Endothelial cell of umbilical vein (primary cell): ENCODE measurements at regions of chr9 and their contacts with region 1.

Region 1: DNA sequence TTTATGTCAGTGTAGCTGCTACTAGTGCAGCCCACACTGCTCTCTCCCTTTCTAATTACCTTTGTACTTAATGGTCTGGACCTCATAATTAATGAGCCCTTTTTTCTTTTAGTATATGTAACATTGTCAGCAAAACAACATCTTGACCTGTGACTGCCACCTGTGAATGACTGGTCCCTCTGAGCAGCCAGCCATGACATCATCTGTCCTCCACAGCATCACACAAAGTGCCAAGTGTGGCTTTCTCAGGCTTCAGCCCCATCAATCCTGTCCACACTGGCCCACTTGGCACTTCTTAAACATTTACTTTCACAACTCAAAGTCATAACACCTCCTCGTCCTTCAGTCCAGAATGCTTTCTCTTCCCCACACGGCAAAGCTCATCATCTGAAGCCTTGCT is 104.7 kb downstream of the GPR21 start:
- DNase-seq: no peak
- H3K4me3 ChIP-seq: no peak overlapping the region
- H3K27ac ChIP-seq: no peak overlapping the region
- H3K4me1 ChIP-seq: no peaks in the 10 kb centered on the region
- H3K27me3 ChIP-seq: no peaks in the 10 kb centered on the region
- CTCF ChIP-seq: no peak
- POLR2A ChIP-seq: no peak

Region 2: GRCh38 chr9:123217148-123217585 is 79.0 kb after region 1 on chr9:
- CTCF ChIA-PET with region 1: no interaction called
- POLR2A ChIA-PET with region 1: no interaction called
- dilution Hi-C with region 1: no loop called
- intact Hi-C with region 1: loop called (anchors 2 kb)
- DNase-seq: peak; percentile 69
- H3K4me3 ChIP-seq: peak overlapping the region in 1 of 3 experiments; percentile 21
- H3K27ac ChIP-seq: no peak overlapping the region
- H3K4me1 ChIP-seq: peaks cover 17% of the 10 kb centered on the region
- H3K27me3 ChIP-seq: no peaks in the 10 kb centered on the region
- CTCF ChIP-seq: no peak
- POLR2A ChIP-seq: no peak